ENCODE measurements at regions of chr18 and their contacts with region 1.

Region 1: GRCh38 chr18:74495581-74496507 is at the start of gene CNDP2:
- DNase-seq: peak; percentile 100
- H3K4me3 Mint-ChIP-seq: peak within 1 kb of the TSS; percentile 95
- H3K27ac Mint-ChIP-seq: peak within 1 kb of the TSS; percentile 100
- H3K4me1 Mint-ChIP-seq: peaks cover 38% of the 10 kb centered on the region
- H3K27me3 Mint-ChIP-seq: no peaks in the 10 kb centered on the region
- total RNA-seq, gene CNDP2: 144 to 147 TPM

Region 2: DNA sequence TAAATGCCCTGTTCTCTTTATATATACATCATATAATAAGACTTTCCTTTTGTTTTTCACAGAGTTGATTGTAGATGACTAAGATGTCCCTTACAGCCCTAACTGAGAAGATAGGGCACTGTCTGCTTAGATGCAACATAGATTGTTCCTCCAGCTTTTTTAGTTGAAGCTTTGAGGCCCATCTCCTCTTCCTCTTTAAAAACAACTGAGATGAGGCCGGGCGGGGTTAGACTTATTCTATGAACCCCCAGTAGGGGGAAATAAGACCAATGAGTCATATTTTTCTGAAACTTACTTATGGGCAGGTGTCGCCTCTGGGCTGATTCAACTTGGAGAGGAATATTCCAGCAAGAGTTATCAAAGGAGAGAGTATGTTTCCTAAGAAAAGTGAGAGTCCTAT is 432.8 kb before region 1 on chr18:
- CTCF ChIA-PET with region 1: no interaction called
- POLR2A ChIA-PET with region 1: no interaction called
- intact Hi-C with region 1: loop called (anchors 5 kb)
- DNase-seq: peak; percentile 43
- H3K4me3 Mint-ChIP-seq: no peak overlapping the region
- H3K27ac Mint-ChIP-seq: peak overlapping the region; percentile 38
- H3K4me1 Mint-ChIP-seq: peaks cover 25% of the 10 kb centered on the region
- H3K27me3 Mint-ChIP-seq: peaks cover 5% of the 10 kb centered on the region

Region 3: GRCh38 chr18:74291771-74292540 is 203.9 kb before region 1 on chr18 and contains the start of gene CYB5A:
- CTCF ChIA-PET with region 1: interaction called, 3 read pairs
- POLR2A ChIA-PET with region 1: no interaction called
- intact Hi-C with region 1: loop called (anchors 1 kb)
- DNase-seq: peak; percentile 98
- H3K4me3 Mint-ChIP-seq: peak within 1 kb of the TSS; percentile 88
- H3K27ac Mint-ChIP-seq: peak within 1 kb of the TSS; percentile 57
- H3K4me1 Mint-ChIP-seq: peaks cover 12% of the 10 kb centered on the region
- H3K27me3 Mint-ChIP-seq: no peaks in the 10 kb centered on the region
- total RNA-seq, gene CYB5A: 64.4 to 65.2 TPM

Region 4: DNA sequence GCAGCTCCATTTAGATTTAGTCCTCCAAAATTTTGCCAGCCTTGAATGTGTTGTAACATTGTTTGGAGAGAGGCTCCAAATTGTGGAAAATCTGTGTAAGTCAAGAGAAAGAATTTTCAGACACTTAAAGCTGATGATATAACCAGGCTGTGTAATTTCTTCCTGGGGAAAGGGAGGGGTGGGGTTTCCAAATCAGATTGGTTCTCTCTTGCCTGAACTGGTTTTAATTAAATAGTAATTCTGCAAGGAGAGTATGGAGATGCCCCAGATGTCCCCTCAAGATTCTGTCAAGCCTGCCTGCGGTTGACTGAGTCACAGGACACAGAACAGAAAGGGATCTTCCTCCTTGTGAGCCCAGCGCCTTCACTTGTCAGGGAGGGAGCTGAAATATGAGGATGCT is 125.7 kb before region 1 on chr18:
- CTCF ChIA-PET with region 1: interaction called, 7 read pairs
- POLR2A ChIA-PET with region 1: no interaction called
- intact Hi-C with region 1: loop called (anchors 1 kb)
- DNase-seq: no peak
- H3K4me3 Mint-ChIP-seq: no peak overlapping the region
- H3K27ac Mint-ChIP-seq: no peak overlapping the region
- H3K4me1 Mint-ChIP-seq: peaks cover 31% of the 10 kb centered on the region
- H3K27me3 Mint-ChIP-seq: peaks cover 5% of the 10 kb centered on the region

Region 5: DNA sequence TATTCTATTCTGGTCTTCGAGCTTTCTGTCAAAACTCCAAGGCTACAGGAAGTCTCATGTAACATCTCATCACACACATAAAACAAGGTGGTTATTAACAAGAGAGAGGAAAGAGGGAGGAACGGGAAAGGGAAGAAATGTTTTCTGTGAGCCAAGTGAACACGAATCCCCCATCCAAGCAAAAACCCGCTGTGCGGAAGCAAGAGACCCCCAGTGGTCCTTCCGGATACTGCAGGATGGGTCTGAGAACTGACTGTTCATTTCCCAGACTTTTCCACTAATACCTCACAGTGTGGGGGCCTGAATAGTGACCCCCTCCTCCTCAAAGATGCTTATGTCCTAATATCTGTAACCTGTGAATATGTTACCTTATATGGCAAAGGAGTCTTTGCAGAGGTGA is 19.7 kb before region 1 on chr18:
- CTCF ChIA-PET with region 1: no interaction called
- POLR2A ChIA-PET with region 1: no interaction called
- intact Hi-C with region 1: no loop called
- DNase-seq: no peak
- H3K4me3 Mint-ChIP-seq: no peak overlapping the region
- H3K27ac Mint-ChIP-seq: no peak overlapping the region
- H3K4me1 Mint-ChIP-seq: no peaks in the 10 kb centered on the region
- H3K27me3 Mint-ChIP-seq: peaks cover 7% of the 10 kb centered on the region

Region 6: DNA sequence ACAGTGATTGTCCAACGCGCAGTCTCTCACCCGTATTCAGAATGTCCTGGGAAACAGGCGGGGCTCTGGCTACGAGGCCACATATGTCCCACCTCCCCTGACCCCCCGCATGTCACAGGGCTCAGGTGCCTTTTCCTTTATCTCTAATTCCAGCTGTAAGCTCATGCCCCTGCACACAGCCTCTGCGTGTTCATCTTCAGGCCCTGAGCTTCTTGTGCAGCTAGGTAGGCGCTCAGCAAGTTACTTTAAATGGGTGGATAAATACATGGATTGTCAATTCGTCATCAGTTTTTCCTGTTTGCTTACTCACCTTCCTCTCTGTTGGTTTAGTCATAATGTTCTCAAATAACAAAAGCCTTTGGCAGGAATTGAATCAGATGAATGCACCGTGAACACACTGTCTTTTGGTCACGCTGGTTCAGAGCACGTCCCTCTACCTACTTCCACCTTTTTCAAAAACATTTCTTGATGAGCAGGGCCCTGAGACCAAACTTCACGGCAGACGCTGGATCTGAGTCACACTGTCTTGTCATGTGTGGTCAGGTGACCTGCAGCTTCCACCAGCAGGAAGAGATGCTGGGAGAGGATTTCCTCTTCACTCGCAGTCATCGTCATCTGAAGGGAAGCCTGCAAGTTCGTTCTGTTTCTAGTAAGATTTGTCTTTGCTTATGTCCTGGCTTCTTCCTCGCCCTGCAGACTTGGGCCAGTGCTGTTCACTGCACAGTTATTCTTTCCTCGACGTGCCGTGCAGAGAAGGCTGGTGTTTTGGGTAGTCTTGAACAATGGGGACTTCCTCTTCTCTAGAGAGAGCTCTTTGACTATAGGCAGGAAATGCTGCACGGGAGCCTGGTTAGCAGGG is 575.0 kb after region 1 on chr18:
- CTCF ChIA-PET with region 1: no interaction called
- POLR2A ChIA-PET with region 1: no interaction called
- intact Hi-C with region 1: loop called (anchors 1 kb)
- DNase-seq: peak; percentile 87
- H3K4me3 Mint-ChIP-seq: peak overlapping the region; percentile 65
- H3K27ac Mint-ChIP-seq: peak overlapping the region; percentile 93
- H3K4me1 Mint-ChIP-seq: peaks cover 40% of the 10 kb centered on the region
- H3K27me3 Mint-ChIP-seq: no peaks in the 10 kb centered on the region

Region 7: DNA sequence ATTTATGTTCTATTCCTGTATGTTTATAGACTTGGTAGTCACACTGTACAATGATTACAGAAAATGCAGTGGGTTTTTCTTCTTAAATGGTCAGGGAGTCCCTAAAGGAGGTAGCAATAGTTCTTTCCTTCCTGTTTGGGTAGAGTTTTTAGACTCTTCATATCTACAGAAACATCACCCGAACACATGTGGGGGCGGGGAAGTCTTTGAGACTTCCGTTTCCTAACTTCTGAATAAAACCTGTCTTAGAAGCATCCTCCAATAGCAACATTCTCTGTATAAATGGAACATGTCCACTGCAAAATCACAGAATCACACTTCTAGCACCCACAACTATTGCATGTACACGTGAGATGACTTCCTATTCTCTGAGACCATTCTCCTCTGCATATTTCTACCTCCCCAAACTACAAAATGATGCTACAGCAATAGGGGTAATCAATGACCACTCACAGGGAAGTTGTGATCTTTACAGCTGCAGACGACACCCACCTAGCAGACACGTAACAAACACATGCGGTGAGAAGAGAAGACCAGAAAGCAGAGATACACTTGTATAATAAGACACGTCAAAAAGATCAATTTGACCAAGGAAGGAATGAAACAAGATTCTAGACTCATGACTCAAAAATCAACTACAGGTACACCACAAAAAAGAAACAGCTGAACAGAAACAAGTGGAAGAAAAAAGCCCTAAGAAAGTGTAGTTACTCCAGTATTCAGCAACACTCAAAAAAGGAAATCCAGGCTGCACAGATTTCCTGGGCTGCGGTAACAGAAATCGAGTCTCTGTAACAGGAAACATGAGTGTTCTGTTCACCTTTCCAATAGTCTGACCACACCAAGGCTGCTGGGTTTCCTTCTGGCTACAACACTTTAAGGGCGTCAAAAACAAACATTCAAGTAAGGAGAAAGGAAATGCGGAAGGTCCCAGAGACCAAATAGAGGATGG is 1878.8 kb after region 1 on chr18:
- CTCF ChIA-PET with region 1: no interaction called
- POLR2A ChIA-PET with region 1: no interaction called
- intact Hi-C with region 1: loop called (anchors 1 kb)
- DNase-seq: peak; percentile 75
- H3K4me3 Mint-ChIP-seq: no peak overlapping the region
- H3K27ac Mint-ChIP-seq: peak overlapping the region; percentile 64
- H3K4me1 Mint-ChIP-seq: peaks cover 50% of the 10 kb centered on the region
- H3K27me3 Mint-ChIP-seq: peaks cover 1% of the 10 kb centered on the region

Measured in activated CD4-positive, alpha-beta memory T cell treated with anti-CD3 and anti-CD28 coated beads for 36 hours (primary cell).